ENCODE measurements at regions of chr7 and their contacts with region 1.

Region 1: DNA sequence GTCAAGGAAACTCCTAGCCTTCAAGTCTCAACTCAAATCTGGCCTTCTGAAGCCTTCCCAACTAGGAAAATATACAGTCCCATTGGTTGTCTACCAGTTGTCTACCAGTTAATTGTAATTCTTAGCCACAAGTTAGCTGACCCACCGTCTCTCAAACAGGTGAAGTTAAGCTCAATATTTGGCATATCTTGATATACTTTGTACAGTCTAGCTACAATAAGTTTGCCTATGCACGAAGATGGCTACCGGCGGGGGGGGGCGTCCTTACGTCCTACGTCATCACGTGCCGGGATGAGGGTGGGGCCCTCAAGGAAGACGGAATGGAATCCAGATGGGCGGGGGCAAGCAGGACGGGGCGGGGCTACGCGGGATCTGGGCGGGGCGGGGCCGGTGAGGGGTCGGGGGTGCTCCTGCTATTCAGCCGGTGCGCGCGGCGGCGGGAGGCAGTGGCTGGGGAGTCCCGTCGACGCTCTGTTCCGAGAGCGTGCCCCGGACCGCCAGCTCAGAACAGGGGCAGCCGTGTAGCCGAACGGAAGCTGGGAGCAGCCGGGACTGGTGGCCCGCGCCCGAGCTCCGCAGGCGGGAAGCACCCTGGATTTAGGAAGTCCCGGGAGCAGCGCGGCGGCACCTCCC is at the start of gene AHR:
- DNase-seq: peak; percentile 92 to 95
- ATAC-seq: peak; percentile 96 to 98 (median 97)
- H3K4me3 ChIP-seq: peak within 1 kb of the TSS; percentile 76 to 97 (median 90)
- H3K27ac ChIP-seq: peak within 1 kb of the TSS; percentile 82 to 97 (median 95)
- H3K4me1 ChIP-seq: peaks cover 0 to 43% (median 36%) of the 10 kb centered on the region in 9 donors
- H3K27me3 ChIP-seq: no peaks in the 10 kb centered on the region
- CTCF ChIP-seq: no peak
- total RNA-seq, gene AHR: 20.8 to 52.8 (median 34.7) TPM

Region 2: DNA sequence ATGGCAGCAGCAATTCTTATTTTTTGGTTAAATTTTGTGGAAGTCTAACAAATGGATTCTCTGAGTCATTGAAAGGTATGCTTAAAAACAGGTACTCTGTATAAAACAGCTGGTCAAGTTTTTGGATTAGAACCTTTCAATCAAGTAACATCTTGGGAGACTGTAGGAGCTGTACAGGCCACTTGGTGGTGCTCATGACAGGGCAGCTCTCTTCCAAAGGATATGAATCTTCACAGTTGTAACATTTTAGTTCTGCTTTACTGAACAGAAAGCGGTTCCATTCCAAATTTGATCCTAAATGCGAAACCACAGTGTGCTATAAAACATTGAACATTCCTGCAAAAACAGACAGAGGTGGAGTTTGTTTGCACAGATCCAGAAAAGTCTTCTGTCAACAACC is 372.0 kb before region 1 on chr7:
- intact Hi-C with region 1: loop called in 1 of 10 experiments (anchors 5 kb)
- DNase-seq: peak in 1 of 2 donors; percentile 21
- ATAC-seq: peak in 7 of 8 donors; percentile 52 to 87 (median 81)
- H3K4me3 ChIP-seq: no peak overlapping the region
- H3K27ac ChIP-seq: no peak overlapping the region
- H3K4me1 ChIP-seq: peaks cover 0 to 15% (median 0%) of the 10 kb centered on the region in 9 donors
- H3K27me3 ChIP-seq: no peaks in the 10 kb centered on the region
- CTCF ChIP-seq: peak in 8 of 9 donors; percentile 46 to 76 (median 66)

Region 3: DNA sequence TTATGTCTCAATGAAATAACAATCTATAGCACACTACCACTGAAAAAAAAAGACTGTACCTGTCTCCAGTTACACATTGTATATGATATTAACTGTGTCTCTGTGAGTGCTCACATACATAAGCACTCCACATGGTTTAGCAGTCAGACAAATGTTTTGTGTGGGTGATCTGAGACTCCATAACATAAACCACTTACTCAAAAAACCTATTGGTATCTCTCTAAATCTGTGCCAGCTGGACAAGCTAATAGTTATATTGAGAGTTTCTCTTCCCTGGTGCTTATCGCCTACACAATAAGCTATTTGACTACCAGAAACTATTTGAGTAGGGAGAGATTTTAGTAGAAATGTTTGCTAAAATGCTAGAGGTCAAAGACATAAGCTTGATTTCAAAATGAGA is 226.5 kb before region 1 on chr7:
- intact Hi-C with region 1: no loop called
- DNase-seq: no peak
- ATAC-seq: no peak
- H3K4me3 ChIP-seq: no peak overlapping the region
- H3K27ac ChIP-seq: no peak overlapping the region
- H3K4me1 ChIP-seq: peaks cover 0 to 12% (median 0%) of the 10 kb centered on the region in 9 donors
- H3K27me3 ChIP-seq: no peaks in the 10 kb centered on the region
- CTCF ChIP-seq: no peak

Region 4: DNA sequence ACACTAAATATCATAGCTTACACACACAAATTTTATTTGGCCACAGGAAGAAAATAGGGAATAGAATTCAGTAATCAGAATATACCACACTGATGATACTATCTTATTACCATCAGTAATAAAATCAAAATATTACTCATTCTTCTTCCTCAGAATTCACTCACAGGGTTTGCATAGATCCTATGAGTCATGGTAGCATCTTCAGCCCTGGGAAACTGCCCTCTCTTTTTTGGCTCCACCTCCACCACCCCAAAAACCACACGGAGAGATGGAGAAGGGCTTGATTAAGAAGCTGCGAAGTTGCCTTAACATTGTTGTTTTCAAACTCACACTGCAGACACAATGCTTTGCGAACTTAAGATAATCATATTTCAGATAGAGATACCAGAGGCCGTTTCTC is 154.0 kb before region 1 on chr7:
- intact Hi-C with region 1: loop called in 1 of 10 experiments (anchors 5 kb)
- DNase-seq: no peak
- ATAC-seq: no peak
- H3K4me3 ChIP-seq: no peak overlapping the region
- H3K27ac ChIP-seq: no peak overlapping the region
- H3K4me1 ChIP-seq: peaks cover 0 to 32% (median 5%) of the 10 kb centered on the region in 9 donors
- H3K27me3 ChIP-seq: no peaks in the 10 kb centered on the region
- CTCF ChIP-seq: no peak

Region 5: DNA sequence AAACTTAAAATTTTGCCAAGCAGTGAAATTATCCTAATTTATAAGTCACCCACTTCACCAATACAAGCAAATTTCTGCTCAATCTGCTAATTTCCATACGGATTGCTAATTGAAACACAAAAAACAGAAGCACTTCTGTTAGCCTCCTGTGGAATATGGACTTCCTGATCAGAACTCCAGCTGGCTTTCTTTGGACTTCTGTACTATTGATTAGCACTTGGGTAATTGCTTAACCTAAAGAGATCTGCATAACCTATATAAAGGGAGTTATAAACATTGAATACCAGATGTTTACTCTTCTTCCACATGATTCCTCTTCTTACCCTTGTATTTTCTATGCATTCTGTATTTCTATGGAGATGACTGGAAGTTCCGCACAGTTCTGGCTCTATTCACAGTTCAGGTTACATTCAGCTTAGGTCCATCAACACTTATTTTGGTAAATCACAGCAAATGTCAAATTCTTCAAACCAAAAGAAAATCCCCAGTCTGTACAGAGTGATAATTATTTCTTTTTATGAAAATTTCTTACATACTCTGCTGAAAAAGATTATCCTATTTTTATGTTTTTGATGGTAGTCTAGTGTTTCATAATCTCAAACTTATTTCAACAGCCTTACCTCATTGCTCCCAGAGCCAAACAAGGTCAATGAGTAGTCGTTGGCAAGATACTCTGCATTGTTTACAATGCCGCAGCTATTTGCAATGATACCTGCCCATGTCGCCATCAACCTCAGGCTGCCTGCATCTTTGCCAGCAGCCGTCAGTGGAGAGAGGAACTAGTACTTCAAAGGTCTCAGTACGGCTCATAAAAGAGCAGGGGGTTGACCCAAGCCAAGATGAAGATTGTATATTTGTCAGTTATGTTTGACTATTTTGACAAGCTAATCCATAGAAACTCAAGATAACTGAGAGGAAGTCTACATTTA is 225.8 kb after region 1 on chr7:
- intact Hi-C with region 1: loop called in 2 of 10 experiments (anchors 10 kb)
- DNase-seq: no peak
- ATAC-seq: peak in 4 of 8 donors; percentile 46 to 74 (median 65)
- H3K4me3 ChIP-seq: no peak overlapping the region
- H3K27ac ChIP-seq: peak overlapping the region in 5 of 10 donors; percentile 11 to 46 (median 22)
- H3K4me1 ChIP-seq: peaks cover 0 to 45% (median 20%) of the 10 kb centered on the region in 9 donors
- H3K27me3 ChIP-seq: no peaks in the 10 kb centered on the region
- CTCF ChIP-seq: no peak

Region 6: DNA sequence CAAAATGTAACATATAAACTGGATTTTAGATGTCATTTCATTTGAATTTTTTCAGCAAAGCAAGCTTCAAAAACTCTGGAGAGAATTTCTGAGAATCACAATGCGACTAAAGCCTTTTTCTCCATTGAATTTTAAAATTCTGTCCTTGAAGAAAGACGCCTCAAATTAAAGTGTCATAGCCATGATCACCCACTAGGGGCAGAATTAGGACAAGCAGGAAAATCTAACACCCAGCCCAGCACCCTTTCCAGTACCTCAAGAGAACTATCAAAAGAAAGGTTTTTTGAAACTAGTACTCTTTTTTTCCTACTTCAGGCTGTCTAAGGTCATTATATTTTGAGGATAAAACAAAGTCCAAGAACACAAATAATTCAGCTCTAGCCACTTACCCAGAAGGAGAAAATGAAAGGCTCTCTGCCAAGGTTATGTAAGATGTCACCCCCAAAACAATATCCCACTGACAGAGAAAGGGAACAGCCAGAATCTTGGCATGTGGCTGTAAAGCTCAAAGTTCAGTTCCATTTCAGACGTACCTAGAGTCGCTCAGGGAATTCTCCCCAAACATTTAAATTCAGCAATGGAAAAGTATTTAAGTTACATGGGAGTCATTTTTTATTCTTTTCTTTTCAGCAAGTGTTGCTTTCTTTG is 342.5 kb after region 1 on chr7:
- intact Hi-C with region 1: loop called in 3 of 10 experiments (anchors 10 kb)
- DNase-seq: peak in 1 of 2 donors; percentile 41
- ATAC-seq: no peak
- H3K4me3 ChIP-seq: no peak overlapping the region
- H3K27ac ChIP-seq: no peak overlapping the region
- H3K4me1 ChIP-seq: peaks cover 0 to 5% (median 0%) of the 10 kb centered on the region in 9 donors
- H3K27me3 ChIP-seq: no peaks in the 10 kb centered on the region
- CTCF ChIP-seq: peak; percentile 48 to 75 (median 65)